GM10248 (cell line): ENCODE measurements at regions of chr3 and their contacts with region 1.

Region 1: GRCh38 chr3:131549340-131549739 is 46.6 kb upstream of the MRPL3 start:
- DNase-seq: no peak
- CTCF ChIP-seq: peak; percentile 59

Region 2: DNA sequence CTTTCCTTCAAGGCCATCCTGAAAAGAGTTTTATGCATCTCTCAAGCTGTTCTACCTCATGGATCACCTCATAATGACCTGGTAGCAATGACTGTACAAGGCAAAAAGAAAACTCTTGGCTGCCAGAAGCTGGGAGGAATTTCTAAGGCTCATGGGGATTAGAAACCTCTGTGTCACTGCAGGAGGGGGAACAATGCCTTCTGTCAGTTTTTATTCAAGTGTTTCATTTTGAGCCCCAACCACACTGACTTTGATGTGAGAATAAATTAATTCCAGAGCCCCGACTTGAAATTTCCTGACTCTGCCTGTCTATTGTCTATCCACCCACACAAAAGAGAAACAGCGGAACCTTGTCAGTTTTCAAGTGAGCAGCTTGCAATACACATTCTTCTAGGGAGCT is 12.2 kb after region 1 on chr3:
- CTCF ChIA-PET with region 1: interaction called, 14 read pairs
- POLR2A ChIA-PET with region 1: no interaction called
- DNase-seq: no peak
- CTCF ChIP-seq: no peak

Region 3: GRCh38 chr3:131568460-131568859 is 19.1 kb after region 1 on chr3:
- CTCF ChIA-PET with region 1: interaction called, 14 read pairs
- POLR2A ChIA-PET with region 1: no interaction called
- DNase-seq: no peak
- CTCF ChIP-seq: no peak

Region 4: GRCh38 chr3:131582438-131582837 is 33.1 kb after region 1 on chr3:
- CTCF ChIA-PET with region 1: interaction called, 11 read pairs
- POLR2A ChIA-PET with region 1: no interaction called
- DNase-seq: no peak
- CTCF ChIP-seq: no peak

Region 5: DNA sequence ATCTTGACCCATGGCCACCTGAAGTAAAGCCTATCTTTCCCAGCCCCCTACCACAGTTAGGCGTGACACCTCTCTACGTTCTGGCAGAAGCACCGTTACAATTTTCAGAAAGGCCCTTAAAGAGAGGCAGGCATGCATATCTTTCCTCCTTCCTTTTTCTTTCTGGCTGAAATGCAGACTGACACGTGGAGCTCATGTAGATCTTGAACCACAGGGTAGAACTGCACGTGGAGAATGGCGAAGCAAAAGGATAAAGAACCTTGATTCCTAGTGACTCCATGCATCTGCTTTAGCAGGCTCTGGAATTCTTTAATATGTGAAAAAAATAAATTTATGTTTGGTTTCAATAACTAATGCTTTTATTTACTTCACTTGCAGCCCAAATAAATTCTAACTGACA is 318.9 kb after region 1 on chr3:
- CTCF ChIA-PET with region 1: no interaction called
- POLR2A ChIA-PET with region 1: no interaction called
- DNase-seq: no peak
- CTCF ChIP-seq: no peak

Region 6: DNA sequence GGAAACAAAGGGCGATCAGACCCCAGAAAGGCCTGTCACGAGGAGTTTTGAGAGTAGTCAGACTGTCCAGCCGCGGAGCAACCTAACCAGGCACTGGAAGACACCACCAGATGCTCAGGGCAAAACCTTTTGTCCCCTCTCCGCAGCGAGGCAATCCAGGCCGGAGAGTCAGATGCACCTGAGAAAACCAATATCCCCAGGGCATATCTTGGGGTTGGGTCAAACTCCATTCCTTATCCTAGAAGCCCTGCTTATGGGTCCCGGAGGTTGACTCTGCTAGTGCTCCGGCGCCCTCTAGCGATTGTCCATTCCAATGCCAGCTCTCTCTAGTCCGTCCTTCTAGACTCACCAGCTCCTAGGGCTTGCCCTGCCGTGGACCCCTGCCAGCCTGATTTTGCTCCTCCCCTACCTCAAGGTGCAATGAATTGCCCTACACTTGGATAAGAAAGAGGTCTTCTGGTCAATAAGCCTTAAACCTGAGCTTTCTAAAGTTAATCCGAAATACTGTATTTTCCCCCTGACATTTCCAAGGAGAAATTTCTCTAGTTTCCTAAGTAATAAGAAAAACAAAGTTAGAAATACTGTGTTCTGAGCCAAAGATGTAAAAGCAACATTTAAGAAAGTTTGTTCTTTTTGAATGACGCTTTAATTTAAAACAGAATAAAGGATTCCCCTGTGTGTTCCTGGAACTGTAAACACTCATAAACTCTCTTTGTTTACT is 480.0 kb after region 1 on chr3:
- CTCF ChIA-PET with region 1: interaction called, 53 read pairs
- POLR2A ChIA-PET with region 1: no interaction called
- DNase-seq: peak; percentile 73
- CTCF ChIP-seq: peak; percentile 83